ENCODE measurements at regions of chr17 and their contacts with region 1.

Region 1: GRCh38 chr17:30031214-30031869 is 85.3 kb upstream of the NSRP1 start:
- DNase-seq: no peak
- H3K4me3 ChIP-seq: no peak overlapping the region
- H3K27ac ChIP-seq: no peak overlapping the region
- H3K4me1 ChIP-seq: no peaks in the 10 kb centered on the region
- H3K27me3 ChIP-seq: no peaks in the 10 kb centered on the region
- CTCF ChIP-seq: no peak

Region 2: GRCh38 chr17:30084788-30085187 is 53.4 kb after region 1 on chr17:
- CTCF ChIA-PET with region 1: no interaction called
- dilution Hi-C with region 1: no loop called
- in situ Hi-C with region 1: loop called in 1 of 2 experiments (anchors 10 kb)
- intact Hi-C with region 1: no loop called
- DNase-seq: no peak
- H3K4me3 ChIP-seq: no peak overlapping the region
- H3K27ac ChIP-seq: no peak overlapping the region
- H3K4me1 ChIP-seq: no peaks in the 10 kb centered on the region
- H3K27me3 ChIP-seq: peaks cover 2% of the 10 kb centered on the region
- CTCF ChIP-seq: no peak

Region 3: DNA sequence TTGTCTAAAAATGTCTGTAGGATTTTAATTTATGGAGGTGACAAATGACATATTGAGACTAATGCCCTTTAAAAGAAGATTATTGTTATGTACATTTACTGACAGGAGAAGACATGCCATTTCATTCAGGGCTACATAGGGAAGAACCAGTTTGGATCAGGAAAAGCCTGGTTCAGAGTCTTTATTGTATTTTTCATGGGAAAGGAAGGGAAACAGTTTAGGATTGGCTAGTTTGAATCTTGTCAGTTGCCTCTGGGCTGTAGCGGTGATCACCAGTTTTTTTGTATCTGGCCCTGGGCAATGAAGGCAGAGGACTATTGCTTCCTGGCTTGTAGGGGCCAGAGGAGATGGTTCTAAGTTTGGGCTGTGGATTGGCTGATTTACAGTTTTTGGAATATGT is 117.0 kb after region 1 on chr17:
- CTCF ChIA-PET with region 1: no interaction called
- dilution Hi-C with region 1: no loop called
- in situ Hi-C with region 1: no loop called
- intact Hi-C with region 1: no loop called
- DNase-seq: no peak
- H3K4me3 ChIP-seq: no peak overlapping the region
- H3K27ac ChIP-seq: no peak overlapping the region
- H3K4me1 ChIP-seq: peaks cover 10% of the 10 kb centered on the region
- H3K27me3 ChIP-seq: no peaks in the 10 kb centered on the region
- CTCF ChIP-seq: no peak